GM13977 (cell line): ENCODE measurements at regions of chr4 and their contacts with region 1.

Region 1: GRCh38 chr4:115851918-115852766 is 738.7 kb upstream of the NDST4 start:
- DNase-seq: peak; percentile 17
- CTCF ChIP-seq: peak; percentile 75

Region 2: GRCh38 chr4:115090483-115091075 is 761.6 kb before region 1 on chr4:
- in situ Hi-C with region 1: loop called (anchors 25 kb)
- DNase-seq: peak; percentile 14
- CTCF ChIP-seq: peak; percentile 52

Region 3: GRCh38 chr4:115969756-115970155 is 117.6 kb after region 1 on chr4:
- in situ Hi-C with region 1: no loop called
- DNase-seq: no peak
- CTCF ChIP-seq: no peak